Heart left ventricle (tissue), 16 donors: ENCODE measurements at regions of chr1 and their contacts with region 1.

Region 1: DNA sequence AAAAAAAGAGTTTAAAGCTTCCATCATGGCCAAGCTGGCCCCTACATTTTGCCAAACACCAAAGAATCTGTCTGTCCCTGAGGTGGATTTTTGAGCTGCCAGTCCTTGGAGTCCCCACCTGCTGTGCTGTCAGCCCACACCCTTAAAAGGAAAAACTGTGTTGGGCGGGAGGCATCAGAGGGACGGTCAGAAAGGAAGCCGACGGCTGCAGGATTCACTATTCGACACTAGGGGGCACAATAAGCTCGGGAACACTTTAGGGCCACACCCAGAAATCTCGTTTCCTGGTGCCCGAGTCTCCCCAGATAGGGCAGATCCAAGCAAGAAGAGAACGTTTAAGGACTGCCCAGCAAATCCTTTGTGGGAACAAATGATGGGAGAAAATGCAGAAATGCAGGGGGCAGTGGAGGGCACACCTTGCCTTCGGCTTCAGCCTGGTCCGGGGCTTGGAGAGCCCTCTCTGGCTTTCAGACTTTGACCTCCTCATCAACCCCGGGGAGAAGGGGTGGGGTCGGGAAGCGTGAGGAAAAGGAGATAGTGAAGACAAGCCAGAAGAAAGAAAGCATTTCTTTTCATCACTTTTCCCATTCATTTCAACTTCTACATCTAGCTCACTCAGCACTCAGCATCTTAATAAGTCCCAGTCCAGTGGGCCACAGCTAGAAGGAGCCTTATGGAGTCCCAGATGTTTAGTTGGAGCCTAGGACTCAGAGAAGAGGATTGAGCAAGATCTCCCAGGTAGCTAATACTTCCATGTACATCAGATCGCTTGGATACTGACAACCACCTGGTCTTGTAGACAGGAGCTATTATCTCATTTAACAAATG is 5.0 kb upstream of the CTTNBP2NL start:
- DNase-seq: peak; percentile 86 to 90 (median 89)
- ATAC-seq: peak; percentile 68 to 83 (median 80)
- H3K4me3 ChIP-seq: peak overlapping the region in 11 of 12 donors; percentile 1 to 59 (median 51)
- H3K27ac ChIP-seq: peak overlapping the region; percentile 57 to 96 (median 91)
- H3K4me1 ChIP-seq: peaks cover 0 to 68% (median 29%) of the 10 kb centered on the region in 12 donors
- H3K27me3 ChIP-seq: no peaks in the 10 kb centered on the region
- CTCF ChIP-seq: peak; percentile 86 to 97 (median 94)
- POLR2A ChIP-seq: peak in 1 of 2 donors; percentile 47

Region 2: DNA sequence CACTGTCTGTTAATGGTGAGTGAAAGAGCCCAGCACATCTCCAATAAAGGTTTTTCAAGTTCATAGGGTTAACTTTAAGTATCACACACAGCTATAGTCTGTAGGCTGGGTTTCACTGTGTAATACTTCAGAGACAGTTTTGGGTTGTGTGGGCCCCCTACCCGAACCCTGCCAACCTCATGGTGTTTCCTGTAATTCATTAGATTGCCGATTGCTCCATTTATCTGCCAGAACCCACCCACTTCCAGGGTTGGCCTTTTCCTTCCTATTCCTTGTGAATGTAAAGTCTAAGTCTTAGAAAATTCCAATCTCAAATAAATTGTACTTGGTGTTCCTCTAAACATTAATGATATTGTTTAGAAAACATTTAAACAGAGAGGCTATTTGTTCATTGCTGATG is 48.6 kb after region 1 on chr1:
- intact Hi-C with region 1: loop called in 3 of 10 experiments (anchors 2 to 5 kb)
- DNase-seq: peak in 3 of 5 donors; percentile 20 to 29 (median 28)
- ATAC-seq: peak; percentile 19 to 75 (median 66)
- H3K4me3 ChIP-seq: no peak overlapping the region
- H3K27ac ChIP-seq: peak overlapping the region; percentile 56 to 75 (median 66)
- H3K4me1 ChIP-seq: peaks cover 0 to 58% (median 38%) of the 10 kb centered on the region in 12 donors
- H3K27me3 ChIP-seq: no peaks in the 10 kb centered on the region
- CTCF ChIP-seq: no peak
- POLR2A ChIP-seq: peak in 1 of 2 donors; percentile 28

Region 3: DNA sequence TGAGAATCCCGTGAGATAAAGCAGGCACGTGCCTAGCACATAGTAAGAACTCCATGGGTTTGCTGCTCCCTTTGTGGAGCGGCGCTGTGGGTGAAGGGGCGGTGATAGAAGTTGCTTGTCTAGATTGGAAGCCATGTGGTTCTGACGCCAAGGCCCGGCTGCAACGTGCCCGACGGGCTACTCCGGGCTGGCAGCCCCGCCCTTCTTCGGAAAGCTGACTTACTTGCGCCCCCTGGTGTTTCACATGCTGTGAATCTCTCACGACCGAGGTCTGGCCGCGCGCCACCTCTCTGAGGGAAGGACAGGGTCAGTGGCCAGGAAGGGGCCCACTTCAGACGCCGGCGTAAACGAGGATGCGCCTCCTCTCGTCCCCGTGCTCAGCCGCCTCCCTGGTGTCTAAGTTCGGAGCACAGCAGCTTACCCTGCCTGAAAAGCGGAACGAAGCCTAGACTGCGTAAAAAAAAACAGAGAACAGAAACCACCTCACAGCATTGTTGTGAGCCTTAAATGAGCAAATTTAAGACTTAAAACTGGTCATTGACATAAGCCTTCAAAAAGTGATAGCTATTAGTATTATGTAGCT is 75.2 kb after region 1 on chr1:
- intact Hi-C with region 1: loop called (anchors 1 to 2 kb)
- DNase-seq: peak; percentile 97 to 98 (median 97)
- ATAC-seq: peak; percentile 88 to 96 (median 93)
- H3K4me3 ChIP-seq: peak overlapping the region in 11 of 12 donors; percentile 1 to 59 (median 48)
- H3K27ac ChIP-seq: peak overlapping the region; percentile 39 to 77 (median 71)
- H3K4me1 ChIP-seq: peaks cover 0 to 29% (median 14%) of the 10 kb centered on the region in 12 donors
- H3K27me3 ChIP-seq: no peaks in the 10 kb centered on the region
- CTCF ChIP-seq: peak; percentile 75 to 97 (median 87)
- POLR2A ChIP-seq: peak in 1 of 2 donors; percentile 40

Region 4: DNA sequence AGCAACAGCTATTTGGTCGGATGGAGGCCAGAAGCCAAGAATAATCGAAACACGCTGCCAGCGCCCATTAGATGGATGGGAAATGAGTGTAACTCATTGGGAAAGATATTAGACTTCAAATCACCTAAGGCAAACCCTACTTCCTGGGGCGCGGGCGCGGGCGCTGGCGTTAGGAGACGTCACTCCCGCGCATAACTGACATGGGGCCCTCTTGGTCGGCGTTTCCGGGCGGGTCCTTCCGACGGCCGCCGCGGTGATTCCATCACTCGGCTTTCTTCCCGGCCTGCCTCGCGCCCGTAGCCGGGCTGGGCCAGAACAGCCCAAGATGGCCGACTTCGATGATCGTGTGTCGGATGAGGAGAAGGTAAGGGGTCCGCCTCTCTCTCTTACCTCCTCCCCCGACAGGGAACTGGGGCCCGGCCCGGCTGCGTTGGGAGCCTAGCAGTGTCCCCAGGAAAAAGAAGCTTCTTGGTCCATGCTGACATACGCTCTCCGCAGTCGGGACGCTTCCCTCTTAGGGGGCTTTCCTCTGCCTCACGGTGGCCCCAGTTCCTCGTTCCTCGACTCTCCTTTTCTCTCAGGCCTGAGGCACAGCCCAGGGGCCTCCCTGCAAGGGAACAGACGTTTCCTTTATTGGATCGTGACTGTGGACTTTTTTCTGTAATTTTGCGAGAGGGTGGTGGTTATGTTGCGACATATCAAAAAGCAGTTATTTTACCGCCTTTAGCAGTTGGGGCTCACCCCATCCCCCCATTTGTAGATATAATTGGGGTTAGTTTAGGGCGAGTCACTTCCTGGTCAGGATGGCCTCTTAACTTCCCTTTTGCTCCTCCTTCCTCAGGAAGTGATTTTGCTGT is 228.8 kb after region 1 on chr1 and contains the start of gene CAPZA1:
- intact Hi-C with region 1: loop called (anchors 2 to 10 kb)
- DNase-seq: peak; percentile 93 to 95 (median 94)
- ATAC-seq: peak; percentile 97 to 99 (median 98)
- H3K4me3 ChIP-seq: peak within 1 kb of the TSS; percentile 71 to 99 (median 89)
- H3K27ac ChIP-seq: peak within 1 kb of the TSS; percentile 92 to 100 (median 98)
- H3K4me1 ChIP-seq: peaks cover 0 to 59% (median 46%) of the 10 kb centered on the region in 12 donors
- H3K27me3 ChIP-seq: no peaks in the 10 kb centered on the region
- CTCF ChIP-seq: no peak
- POLR2A ChIP-seq: peak in 1 of 2 donors; percentile 74
- total RNA-seq, gene CAPZA1: 23.8 to 98.4 (median 32.6) TPM

Region 5: GRCh38 chr1:112706908-112707663 is 316.1 kb after region 1 on chr1 and contains the start of gene RHOC:
- intact Hi-C with region 1: loop called (anchors 2 to 5 kb)
- DNase-seq: peak; percentile 90 to 93 (median 92)
- ATAC-seq: peak; percentile 56 to 87 (median 74)
- H3K4me3 ChIP-seq: peak within 1 kb of the TSS; percentile 75 to 100 (median 98)
- H3K27ac ChIP-seq: peak within 1 kb of the TSS; percentile 92 to 100 (median 99)
- H3K4me1 ChIP-seq: peaks cover 3 to 49% (median 39%) of the 10 kb centered on the region in 12 donors
- H3K27me3 ChIP-seq: no peaks in the 10 kb centered on the region
- CTCF ChIP-seq: peak; percentile 83 to 97 (median 94)
- POLR2A ChIP-seq: peak; percentile 64 to 95
- total RNA-seq, gene RHOC: 147 to 432 (median 217) TPM